ENCODE measurements at regions of chr12 and their contacts with region 1.

Region 1: DNA sequence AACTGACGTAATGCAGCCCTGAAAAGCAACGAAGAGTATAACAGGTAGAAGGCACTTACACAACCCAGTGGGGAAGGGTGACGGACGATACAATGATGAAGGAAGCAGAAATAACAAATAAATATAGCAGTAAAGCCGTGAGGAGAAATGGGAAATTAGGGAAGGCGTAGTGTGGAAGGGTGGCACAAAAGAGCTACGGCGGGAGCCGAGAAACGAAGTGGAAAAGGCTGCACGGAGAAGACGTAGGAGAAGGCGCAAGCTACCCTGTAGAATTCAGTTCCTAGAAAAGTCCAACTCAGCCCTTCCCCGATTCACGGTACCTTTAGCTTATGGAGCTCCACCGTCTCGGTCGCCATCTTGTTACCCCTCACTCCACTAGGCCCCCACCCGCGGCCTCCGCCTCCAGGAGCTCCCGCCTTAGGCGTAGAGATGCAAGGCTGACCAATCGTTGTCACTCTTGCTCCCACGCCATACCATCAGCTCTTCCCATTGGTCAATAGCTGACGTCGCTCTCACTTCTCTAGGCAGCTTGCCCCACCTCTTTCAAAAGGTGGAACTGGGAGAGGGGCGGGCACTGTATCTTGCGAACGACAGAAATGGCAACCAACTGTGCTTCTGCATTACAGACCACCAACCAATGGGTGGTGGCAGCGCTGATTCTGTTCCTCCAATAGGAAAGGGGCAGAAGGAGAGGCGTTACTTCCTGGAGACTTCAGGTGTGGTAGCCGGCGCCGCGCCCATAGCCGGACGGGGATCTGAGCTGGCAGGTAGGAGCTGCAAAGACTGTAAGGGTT is at the starts of genes ORMDL2 and SARNP:
- DNase-seq: peak; percentile 85 to 99 (median 98)
- ATAC-seq: peak; percentile 92 to 93
- H3K4me3 Mint-ChIP-seq: peak within 1 kb of the TSS in 1 of 10 donors; percentile 77
- H3K27ac Mint-ChIP-seq: no peak within 1 kb of the TSS
- H3K4me1 Mint-ChIP-seq: peaks cover 10 to 51% (median 41%) of the 10 kb centered on the region in 4 donors
- H3K27me3 Mint-ChIP-seq: no peaks in the 10 kb centered on the region
- polyA plus RNA-seq, gene ORMDL2: 71.6 to 92.5 (median 90.3) TPM
- polyA plus RNA-seq, gene SARNP: 93.6 to 104 (median 94.0) TPM

Region 2: GRCh38 chr12:55738123-55739024 is 79.2 kb before region 1 on chr12:
- POLR2A ChIA-PET with region 1: interaction called, 14 read pairs
- DNase-seq: peak; percentile 48 to 91 (median 80)
- ATAC-seq: peak; percentile 65 to 80
- H3K4me3 Mint-ChIP-seq: peak overlapping the region; percentile 82 to 95 (median 93)
- H3K27ac Mint-ChIP-seq: peak overlapping the region; percentile 77 to 98 (median 95)
- H3K4me1 Mint-ChIP-seq: peaks cover 16 to 32% (median 26%) of the 10 kb centered on the region in 4 donors
- H3K27me3 Mint-ChIP-seq: no peaks in the 10 kb centered on the region

Region 3: DNA sequence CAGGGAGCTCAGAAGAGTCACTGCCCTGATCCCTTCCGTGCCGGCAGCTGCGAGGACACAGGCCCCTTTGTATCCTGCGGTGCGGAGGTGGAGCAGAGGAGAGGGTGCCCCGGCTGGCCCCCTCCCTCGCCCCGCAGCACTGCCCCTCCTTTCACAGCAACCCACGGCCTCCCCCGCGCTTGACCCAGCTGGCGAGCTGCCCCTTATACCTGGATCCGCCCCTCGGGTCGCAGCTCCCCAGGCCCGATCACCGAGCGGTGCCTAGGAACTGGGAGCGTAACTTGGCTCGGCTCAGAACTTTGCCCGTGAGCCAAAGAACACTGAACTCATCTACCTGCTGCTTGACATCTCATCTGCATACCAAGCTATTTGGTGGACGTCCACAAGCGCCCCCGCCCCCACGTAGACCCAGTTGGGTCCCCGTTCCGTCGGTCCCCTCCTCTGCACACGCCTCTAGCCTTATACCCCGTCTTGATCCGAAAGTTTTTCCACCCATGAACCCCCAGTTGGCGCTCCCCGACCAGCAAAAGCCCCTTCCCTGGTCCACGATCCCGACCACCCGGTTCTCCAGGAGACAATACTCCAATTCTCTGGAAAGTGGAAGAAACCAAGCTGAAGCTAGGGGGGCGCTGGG is 12.5 kb after region 1 on chr12:
- POLR2A ChIA-PET with region 1: interaction called, 210 read pairs
- DNase-seq: peak; percentile 15 to 71 (median 42)
- ATAC-seq: peak; percentile 21 to 36
- H3K4me3 Mint-ChIP-seq: peak overlapping the region; percentile 94 to 99 (median 98)
- H3K27ac Mint-ChIP-seq: peak overlapping the region; percentile 85 to 99 (median 96)
- H3K4me1 Mint-ChIP-seq: peaks cover 37 to 63% (median 59%) of the 10 kb centered on the region in 4 donors
- H3K27me3 Mint-ChIP-seq: no peaks in the 10 kb centered on the region